ENCODE measurements at regions of chr16 and their contacts with region 1.

Region 1: GRCh38 chr16:27374804-27375425 is 27.1 kb upstream of the IL21R start:
- DNase-seq: peak in 6 of 9 experiments; percentile 46 to 65 (median 58)
- ATAC-seq: peak; percentile 39
- H3K4me3 ChIP-seq: no peak overlapping the region
- H3K4me3 Mint-ChIP-seq: no peak overlapping the region
- H3K27ac ChIP-seq: no peak overlapping the region
- H3K27ac Mint-ChIP-seq: no peak overlapping the region
- H3K4me1 ChIP-seq: peaks cover 63% of the 10 kb centered on the region
- H3K4me1 Mint-ChIP-seq: peaks cover 42% of the 10 kb centered on the region
- H3K27me3 ChIP-seq: no peaks in the 10 kb centered on the region
- H3K27me3 Mint-ChIP-seq: no peaks in the 10 kb centered on the region
- CTCF ChIP-seq: peak; percentile 42

Region 2: DNA sequence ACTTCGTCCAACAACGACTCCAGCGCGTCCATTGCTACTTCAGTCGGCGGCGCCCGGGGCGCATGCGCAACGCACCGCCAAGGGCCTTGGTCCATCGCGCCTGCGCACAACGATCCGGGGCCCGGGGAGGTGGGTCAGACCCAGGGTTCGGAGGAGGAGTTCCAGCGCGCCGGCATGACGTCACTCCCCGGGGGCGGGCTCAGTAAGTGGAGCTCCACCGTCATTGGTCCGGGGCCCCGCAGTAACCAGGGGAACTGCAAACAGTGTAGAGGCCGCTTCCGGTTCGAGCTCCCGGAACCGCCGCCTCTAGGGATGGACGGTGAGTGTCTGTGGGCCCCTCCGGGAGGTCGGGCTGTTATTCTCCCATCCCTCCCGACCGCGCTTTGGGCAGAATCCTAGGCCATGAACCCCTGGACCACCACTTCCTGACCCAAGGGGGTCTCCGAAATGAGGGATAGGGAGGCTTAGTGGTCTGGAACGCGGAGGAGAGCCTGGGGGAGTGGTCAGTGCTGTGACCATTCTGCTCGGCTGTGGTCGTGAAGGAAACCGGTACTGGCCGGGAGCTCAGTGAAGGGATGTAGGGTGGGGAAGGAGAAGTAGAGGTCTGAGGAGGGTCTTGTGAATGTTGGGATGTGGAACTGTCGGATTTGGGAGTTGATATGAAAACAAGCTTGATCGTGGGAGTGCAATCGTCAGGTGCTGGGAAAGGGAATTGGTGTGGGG is 175.1 kb after region 1 on chr16 and contains the starts of genes GTF3C1 and KATNIP:
- CTCF ChIA-PET with region 1: no interaction called
- POLR2A ChIA-PET with region 1: no interaction called
- intact Hi-C with region 1: loop called in 1 of 2 experiments (anchors 10 kb)
- DNase-seq: peak; percentile 99 to 100 (median 100)
- ATAC-seq: peak; percentile 100
- H3K4me3 ChIP-seq: peak within 1 kb of the TSS; percentile 97
- H3K4me3 Mint-ChIP-seq: peak within 1 kb of the TSS; percentile 92
- H3K27ac ChIP-seq: peak within 1 kb of the TSS; percentile 91 to 94
- H3K27ac Mint-ChIP-seq: peak within 1 kb of the TSS; percentile 94
- H3K4me1 ChIP-seq: peaks cover 29% of the 10 kb centered on the region
- H3K4me1 Mint-ChIP-seq: peaks cover 46% of the 10 kb centered on the region
- H3K27me3 ChIP-seq: no peaks in the 10 kb centered on the region
- H3K27me3 Mint-ChIP-seq: no peaks in the 10 kb centered on the region
- CTCF ChIP-seq: no peak
- total RNA-seq, gene GTF3C1: 110 to 114 TPM
- total RNA-seq, gene KATNIP: 16.0 to 18.9 TPM

Region 3: GRCh38 chr16:27721531-27722181 is 346.7 kb after region 1 on chr16:
- CTCF ChIA-PET with region 1: no interaction called
- POLR2A ChIA-PET with region 1: no interaction called
- intact Hi-C with region 1: no loop called
- DNase-seq: no peak
- ATAC-seq: no peak
- H3K4me3 ChIP-seq: no peak overlapping the region
- H3K4me3 Mint-ChIP-seq: no peak overlapping the region
- H3K27ac ChIP-seq: peak overlapping the region in 1 of 2 experiments; percentile 29
- H3K27ac Mint-ChIP-seq: no peak overlapping the region
- H3K4me1 ChIP-seq: no peaks in the 10 kb centered on the region
- H3K4me1 Mint-ChIP-seq: no peaks in the 10 kb centered on the region
- H3K27me3 ChIP-seq: no peaks in the 10 kb centered on the region
- H3K27me3 Mint-ChIP-seq: no peaks in the 10 kb centered on the region
- CTCF ChIP-seq: no peak